CD4-positive, alpha-beta T cell (primary cell): ENCODE measurements at regions of chr2 and their contacts with region 1.

Region 1: DNA sequence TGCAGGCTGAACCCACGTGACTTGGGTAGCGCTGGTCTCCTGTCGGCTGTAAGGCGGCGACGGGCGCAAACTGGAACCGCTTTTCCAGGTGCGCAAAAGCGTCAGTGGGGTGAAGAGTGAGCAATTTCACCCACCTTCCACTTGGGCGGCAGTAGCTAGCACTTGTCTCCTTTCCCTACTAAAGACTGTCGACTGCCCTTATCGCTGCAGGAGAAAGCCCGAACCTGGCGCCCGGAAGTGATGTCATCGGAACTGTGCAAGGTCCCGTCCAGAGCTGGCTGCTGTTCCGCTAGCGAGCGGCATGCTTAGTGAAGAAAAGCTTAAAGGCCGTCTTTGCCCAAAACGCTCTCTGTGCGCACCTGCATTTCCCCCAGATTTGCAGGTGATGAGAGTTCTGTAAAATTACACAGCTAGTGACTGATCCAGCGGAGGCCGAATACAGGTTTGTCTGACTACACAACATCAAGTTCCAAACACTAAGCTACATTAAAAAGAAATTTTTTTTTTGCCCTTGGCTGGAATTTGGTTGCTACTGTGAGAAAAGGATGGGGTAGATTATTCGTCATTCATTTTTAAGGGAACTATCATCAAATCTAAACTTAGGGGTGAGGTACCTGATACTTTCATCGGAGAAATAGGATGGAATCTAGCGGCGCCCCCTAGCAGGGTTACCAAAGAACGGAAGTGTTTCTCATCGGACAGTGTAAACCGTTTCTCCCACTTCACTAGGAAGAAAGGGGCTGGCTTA is at the start of gene OSGEPL1:
- DNase-seq: peak; percentile 84 to 96 (median 92)
- ATAC-seq: peak; percentile 92
- H3K4me3 ChIP-seq: peak within 1 kb of the TSS; percentile 78
- H3K4me3 Mint-ChIP-seq: peak within 1 kb of the TSS; percentile 100
- H3K27ac ChIP-seq: peak within 1 kb of the TSS; percentile 87 to 91
- H3K27ac Mint-ChIP-seq: peak within 1 kb of the TSS; percentile 100
- H3K4me1 ChIP-seq: peaks cover 9% of the 10 kb centered on the region
- H3K4me1 Mint-ChIP-seq: peaks cover 17% of the 10 kb centered on the region
- H3K27me3 ChIP-seq: no peaks in the 10 kb centered on the region
- H3K27me3 Mint-ChIP-seq: no peaks in the 10 kb centered on the region
- CTCF ChIP-seq: peak; percentile 73
- total RNA-seq, gene OSGEPL1: 3.3 to 3.7 TPM

Region 2: DNA sequence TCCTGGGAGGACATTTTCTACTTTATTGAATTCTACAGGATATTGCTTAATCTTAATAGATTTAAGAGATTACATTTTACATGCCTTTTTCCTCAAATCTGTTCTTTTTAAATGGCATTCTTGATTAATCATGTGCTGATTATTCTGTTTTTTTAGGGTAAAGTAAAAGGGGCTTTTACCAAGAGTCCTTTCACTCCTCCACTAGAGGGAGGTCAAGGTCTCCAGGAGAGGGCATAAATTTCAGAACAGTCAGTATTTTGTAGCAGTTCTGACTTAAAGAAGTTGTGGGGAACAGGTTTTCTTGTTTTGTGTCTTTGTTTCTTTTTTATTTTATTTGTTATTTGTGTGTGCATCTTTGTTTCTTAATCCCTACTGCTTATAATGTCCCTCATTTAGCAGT is 296.1 kb before region 1 on chr2:
- CTCF ChIA-PET with region 1: no interaction called
- POLR2A ChIA-PET with region 1: no interaction called
- intact Hi-C with region 1: loop called in 1 of 2 experiments (anchors 10 kb)
- DNase-seq: peak in 3 of 14 experiments; percentile 34 to 44 (median 34)
- ATAC-seq: no peak
- H3K4me3 ChIP-seq: no peak overlapping the region
- H3K4me3 Mint-ChIP-seq: no peak overlapping the region
- H3K27ac ChIP-seq: no peak overlapping the region
- H3K27ac Mint-ChIP-seq: peak overlapping the region; percentile 20
- H3K4me1 ChIP-seq: no peaks in the 10 kb centered on the region
- H3K4me1 Mint-ChIP-seq: no peaks in the 10 kb centered on the region
- H3K27me3 ChIP-seq: no peaks in the 10 kb centered on the region
- H3K27me3 Mint-ChIP-seq: no peaks in the 10 kb centered on the region
- CTCF ChIP-seq: peak; percentile 20

Region 3: DNA sequence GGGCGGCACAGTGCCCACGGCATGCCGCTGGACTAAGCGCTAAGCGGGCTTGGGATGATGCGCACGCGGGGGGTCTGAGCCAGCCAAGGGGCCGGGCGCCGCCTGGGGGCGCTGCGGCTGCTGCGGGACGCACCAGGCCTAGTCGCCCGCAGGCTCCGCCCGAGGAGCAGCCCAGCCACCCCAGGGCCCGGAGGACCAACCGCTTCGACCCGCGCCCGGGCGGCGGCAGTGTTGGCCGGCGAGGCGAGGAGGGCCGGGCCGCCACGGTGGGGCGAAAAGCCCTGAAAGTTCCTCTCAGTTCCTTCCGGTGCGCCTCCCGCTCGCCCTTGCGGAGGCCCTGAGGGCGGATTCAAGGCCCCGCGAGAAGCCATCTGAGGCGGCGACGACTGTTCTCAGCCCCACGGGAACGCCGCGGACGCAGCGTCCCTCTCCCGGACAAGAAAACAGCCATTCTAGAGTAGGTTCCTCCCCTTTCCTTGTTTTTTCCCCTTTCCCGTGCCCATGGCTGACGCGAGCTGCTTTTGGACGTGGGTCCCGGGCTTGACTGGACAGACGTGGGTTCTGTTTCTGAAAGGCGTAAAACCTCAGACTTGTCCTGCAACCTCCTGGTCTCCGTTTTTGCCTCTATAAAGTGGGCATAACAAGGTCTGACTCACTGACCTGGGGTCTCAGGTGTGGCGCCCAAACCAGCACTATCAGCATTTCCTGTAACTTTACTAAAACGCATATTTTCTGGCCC is 88.2 kb before region 1 on chr2 and contains the start of gene ANKAR:
- CTCF ChIA-PET with region 1: interaction called, 16 read pairs
- POLR2A ChIA-PET with region 1: interaction called, 16 read pairs
- intact Hi-C with region 1: loop called (anchors 1 to 5 kb)
- DNase-seq: peak; percentile 61 to 93 (median 74)
- ATAC-seq: peak; percentile 93
- H3K4me3 ChIP-seq: peak within 1 kb of the TSS; percentile 71
- H3K4me3 Mint-ChIP-seq: peak within 1 kb of the TSS; percentile 95
- H3K27ac ChIP-seq: peak within 1 kb of the TSS; percentile 73 to 81
- H3K27ac Mint-ChIP-seq: peak within 1 kb of the TSS; percentile 98
- H3K4me1 ChIP-seq: peaks cover 21% of the 10 kb centered on the region
- H3K4me1 Mint-ChIP-seq: peaks cover 29% of the 10 kb centered on the region
- H3K27me3 ChIP-seq: no peaks in the 10 kb centered on the region
- H3K27me3 Mint-ChIP-seq: no peaks in the 10 kb centered on the region
- CTCF ChIP-seq: peak; percentile 76
- total RNA-seq, gene ANKAR: 7.9 to 8.0 TPM

Region 4: DNA sequence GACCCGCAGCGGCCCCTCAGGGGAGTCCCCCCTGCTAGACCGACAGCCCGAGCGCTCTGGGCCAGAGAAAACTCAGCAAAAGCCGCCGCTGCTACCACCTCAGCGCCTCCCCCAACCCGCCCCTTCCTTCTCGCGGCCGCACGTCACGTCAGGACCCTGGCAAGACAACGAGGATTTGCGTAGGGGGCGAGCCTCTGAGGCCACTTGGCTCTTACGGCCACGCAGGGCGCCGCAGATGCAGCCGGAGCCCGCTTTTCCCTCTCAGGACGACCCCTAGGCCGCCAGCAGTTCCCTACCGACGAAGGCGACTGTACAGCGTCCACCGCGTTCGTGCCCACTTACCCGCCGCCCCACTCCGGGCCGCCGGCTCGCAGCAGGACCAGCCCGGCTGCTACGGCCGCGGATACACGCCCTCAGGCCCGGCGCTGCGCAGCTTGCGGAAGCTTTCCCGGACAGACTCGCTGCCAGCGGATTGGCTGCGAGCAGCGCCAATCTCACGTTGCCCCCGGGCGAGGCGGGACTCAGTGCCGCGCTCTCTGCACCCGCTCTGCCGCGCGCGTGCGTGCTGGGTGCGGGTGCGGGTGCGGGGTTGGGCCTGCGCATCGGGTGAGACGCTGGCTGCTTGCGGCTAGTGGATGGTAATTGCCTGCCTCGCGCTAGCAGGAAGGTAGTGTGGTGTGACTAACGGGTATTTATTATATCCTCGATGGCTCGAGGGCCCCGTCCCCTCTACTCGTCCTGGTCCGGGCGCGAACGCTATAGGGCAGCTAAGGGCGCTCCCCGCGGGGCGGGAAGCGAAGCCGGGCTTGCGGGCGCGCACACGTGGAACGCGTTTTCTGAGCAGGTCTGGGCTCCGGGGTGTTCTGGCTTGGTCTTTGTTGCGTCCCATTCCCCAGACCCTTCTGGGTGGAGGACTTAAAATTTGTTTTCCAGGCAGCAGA is 21.5 kb after region 1 on chr2 and contains the starts of genes ORMDL1 and PMS1:
- CTCF ChIA-PET with region 1: interaction called, 23 read pairs
- POLR2A ChIA-PET with region 1: interaction called, 96 read pairs
- intact Hi-C with region 1: loop called (anchors 1 to 2 kb)
- DNase-seq: peak; percentile 84 to 98 (median 92)
- ATAC-seq: peak; percentile 91
- H3K4me3 ChIP-seq: peak within 1 kb of the TSS; percentile 84
- H3K4me3 Mint-ChIP-seq: peak within 1 kb of the TSS; percentile 99
- H3K27ac ChIP-seq: peak within 1 kb of the TSS; percentile 90 to 93
- H3K27ac Mint-ChIP-seq: peak within 1 kb of the TSS; percentile 99
- H3K4me1 ChIP-seq: peaks cover 23% of the 10 kb centered on the region
- H3K4me1 Mint-ChIP-seq: peaks cover 58% of the 10 kb centered on the region
- H3K27me3 ChIP-seq: no peaks in the 10 kb centered on the region
- H3K27me3 Mint-ChIP-seq: no peaks in the 10 kb centered on the region
- CTCF ChIP-seq: no peak
- total RNA-seq, gene ORMDL1: 104 to 106 TPM
- total RNA-seq, gene PMS1: 9.6 to 9.8 TPM

Region 5: DNA sequence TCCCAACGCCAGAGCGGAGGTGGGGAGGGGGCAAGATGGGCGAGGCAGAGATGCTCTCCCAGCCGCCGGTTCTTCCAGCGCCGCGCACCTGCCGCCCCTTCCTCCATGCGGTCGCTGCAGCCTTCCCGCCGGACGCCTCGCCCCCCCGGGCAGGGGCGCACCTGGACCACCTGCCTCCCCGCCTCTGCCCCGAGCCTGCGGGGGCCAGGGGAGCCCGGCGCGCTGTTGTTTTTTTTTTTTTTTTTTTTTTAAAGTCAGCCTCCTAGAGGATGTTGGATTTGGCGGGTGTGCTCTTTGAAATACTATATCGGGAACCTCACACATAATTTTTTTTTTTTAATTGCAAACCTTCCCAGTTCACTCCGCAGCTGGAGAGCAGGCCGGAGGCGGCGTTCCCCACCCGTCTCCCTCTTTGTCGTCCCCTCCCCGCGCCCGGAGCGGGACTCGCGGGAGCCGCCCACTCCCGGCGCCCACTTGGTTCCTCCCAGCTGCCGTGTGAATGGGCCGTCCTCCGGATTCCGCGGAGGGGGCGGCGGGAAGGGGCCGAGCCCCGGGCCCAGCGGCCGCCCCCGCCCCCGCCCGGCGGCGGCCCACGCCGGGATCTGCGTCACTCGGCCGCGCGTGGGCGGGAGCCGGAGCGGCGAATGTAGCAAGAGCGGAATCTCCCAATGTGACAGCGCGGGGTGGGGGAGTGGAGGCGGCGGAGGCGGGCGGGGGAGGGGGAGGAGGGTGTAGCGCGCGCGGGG is 885.7 kb after region 1 on chr2:
- CTCF ChIA-PET with region 1: no interaction called
- POLR2A ChIA-PET with region 1: no interaction called
- intact Hi-C with region 1: loop called in 1 of 2 experiments (anchors 5 kb)
- DNase-seq: peak; percentile 82 to 98 (median 89)
- ATAC-seq: peak; percentile 77
- H3K4me3 ChIP-seq: peak overlapping the region; percentile 71
- H3K4me3 Mint-ChIP-seq: peak overlapping the region; percentile 92
- H3K27ac ChIP-seq: peak overlapping the region; percentile 83
- H3K27ac Mint-ChIP-seq: peak overlapping the region; percentile 93
- H3K4me1 ChIP-seq: peaks cover 20% of the 10 kb centered on the region
- H3K4me1 Mint-ChIP-seq: peaks cover 57% of the 10 kb centered on the region
- H3K27me3 ChIP-seq: no peaks in the 10 kb centered on the region
- H3K27me3 Mint-ChIP-seq: no peaks in the 10 kb centered on the region
- CTCF ChIP-seq: no peak